Activated T-helper 2 cell treated with anti-CD3 and anti-CD28 coated beads, Interferon-gamma antibody, Interleukin-2, Interleukin-4, amounts not matched to agents 10 μg/mL and 5 μg/mL and 100 μg/mL, durations not matched to agents 14 hours and 24 hours and 36 hours (primary cell): ENCODE measurements at regions of chr7 and their contacts with region 1.

Region 1: DNA sequence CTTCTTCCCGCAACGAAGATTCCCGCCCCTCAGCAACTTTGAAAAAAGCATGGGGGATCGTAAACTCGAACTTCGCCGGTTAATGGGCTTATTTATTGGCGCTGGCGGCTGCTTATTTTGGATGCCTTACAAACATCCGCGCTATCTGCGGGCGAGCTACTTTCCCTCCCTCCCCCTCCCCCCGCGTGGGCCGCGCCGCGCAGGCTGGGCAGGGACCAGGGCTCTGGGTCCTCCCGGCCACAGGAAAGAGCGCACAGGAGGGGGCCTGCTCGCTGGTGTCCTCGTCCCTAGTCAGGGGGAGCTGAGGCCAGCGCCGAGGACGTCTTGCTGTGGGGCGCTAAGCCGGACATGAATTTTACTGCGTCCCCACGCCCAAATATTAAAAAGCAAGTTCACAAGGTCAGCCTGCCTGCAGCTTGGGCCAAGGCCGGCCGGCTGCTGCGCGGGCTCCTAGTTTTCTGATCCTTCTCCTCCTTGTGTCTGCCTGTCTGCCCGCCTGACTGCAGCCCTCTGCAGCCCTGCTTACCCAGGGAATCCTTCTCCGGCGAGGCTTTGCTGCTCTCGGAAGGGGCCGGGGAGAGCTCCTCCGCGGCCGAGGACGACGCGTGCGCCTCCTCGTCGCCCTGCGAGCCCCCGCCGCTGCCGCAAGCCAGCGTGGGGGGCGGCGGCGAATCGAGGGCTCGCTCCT is 1.2 kb downstream of the HOXA10 start:
- DNase-seq: no peak
- H3K4me3 Mint-ChIP-seq: no peak overlapping the region
- H3K27ac Mint-ChIP-seq: no peak overlapping the region
- H3K4me1 Mint-ChIP-seq: peaks cover 2% of the 10 kb centered on the region
- H3K27me3 Mint-ChIP-seq: peaks cover 64% of the 10 kb centered on the region

Region 2: DNA sequence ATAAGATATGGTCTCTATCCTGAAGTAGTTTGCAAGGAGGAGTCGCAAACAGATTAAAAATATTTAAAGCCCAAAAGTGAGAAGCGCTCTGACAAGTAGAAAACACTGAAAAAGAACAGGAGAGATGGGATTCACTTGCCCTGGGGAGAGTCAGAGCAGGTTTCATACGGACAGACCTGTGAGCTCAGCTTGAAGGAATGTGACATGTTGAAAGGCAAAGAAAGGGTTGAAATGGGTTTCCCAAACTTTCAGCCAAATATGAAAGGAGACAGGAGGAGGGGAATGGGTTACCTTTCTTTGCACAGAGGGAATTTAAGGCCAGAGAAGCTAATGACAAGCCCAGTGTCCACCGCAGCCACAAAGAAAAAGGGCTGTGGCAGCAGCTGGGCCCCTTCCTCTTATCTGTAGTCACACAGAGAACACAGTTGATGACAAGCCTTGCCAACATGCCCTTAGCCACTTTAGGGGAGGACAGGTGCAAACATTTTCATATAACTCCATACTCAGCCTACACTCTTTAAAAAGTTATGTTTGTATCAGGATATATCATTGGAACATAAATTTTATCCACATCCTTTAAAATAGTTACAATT is 92.0 kb before region 1 on chr7:
- intact Hi-C with region 1: no loop called
- DNase-seq: no peak
- H3K4me3 Mint-ChIP-seq: no peak overlapping the region
- H3K27ac Mint-ChIP-seq: no peak overlapping the region
- H3K4me1 Mint-ChIP-seq: peaks cover 7% of the 10 kb centered on the region
- H3K27me3 Mint-ChIP-seq: peaks cover 16% of the 10 kb centered on the region

Region 3: DNA sequence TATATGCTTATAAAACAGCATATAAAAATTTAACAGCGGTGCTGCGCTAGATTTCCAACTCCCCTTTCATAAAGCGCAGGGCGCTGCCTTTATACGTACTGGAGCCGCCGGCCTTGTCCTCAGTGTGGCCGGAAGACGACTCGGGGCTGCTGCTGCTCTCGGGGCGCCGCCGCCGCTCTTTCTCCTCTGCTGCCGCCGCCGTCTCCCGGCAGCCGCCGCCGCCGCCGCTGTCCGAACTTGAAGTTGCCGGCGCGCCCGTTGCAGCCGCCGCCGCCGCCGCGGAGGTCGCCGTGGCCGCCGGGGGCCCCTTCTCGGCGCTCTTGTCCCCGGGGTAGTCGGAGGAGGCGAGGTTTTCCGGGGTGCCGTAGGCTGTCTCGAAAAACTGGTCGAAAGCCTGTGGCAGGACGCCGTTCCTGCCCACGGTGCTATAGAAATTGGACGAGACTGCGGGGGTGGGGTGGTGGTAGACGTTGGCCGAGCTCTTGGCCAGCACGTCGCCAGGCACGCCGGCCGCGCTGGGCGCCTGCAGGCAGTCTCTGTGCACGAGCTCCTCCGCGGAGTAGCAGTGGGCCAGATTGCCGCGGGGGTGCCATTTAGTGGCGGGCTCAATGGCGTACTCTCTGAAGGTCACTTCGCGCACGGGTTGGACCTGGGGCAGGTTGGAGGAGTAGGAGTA is 11.5 kb after region 1 on chr7:
- intact Hi-C with region 1: loop called (anchors 1 kb)
- DNase-seq: no peak
- H3K4me3 Mint-ChIP-seq: no peak overlapping the region
- H3K27ac Mint-ChIP-seq: peak overlapping the region; percentile 55
- H3K4me1 Mint-ChIP-seq: peaks cover 14% of the 10 kb centered on the region
- H3K27me3 Mint-ChIP-seq: peaks cover 73% of the 10 kb centered on the region

Region 4: GRCh38 chr7:27210441-27211083 is 37.6 kb after region 1 on chr7:
- intact Hi-C with region 1: no loop called
- DNase-seq: no peak
- H3K4me3 Mint-ChIP-seq: peak overlapping the region; percentile 10
- H3K27ac Mint-ChIP-seq: no peak overlapping the region
- H3K4me1 Mint-ChIP-seq: no peaks in the 10 kb centered on the region
- H3K27me3 Mint-ChIP-seq: peaks cover 83% of the 10 kb centered on the region